GM10248 (cell line): ENCODE measurements at regions of chr1 and their contacts with region 1.

Region 1: DNA sequence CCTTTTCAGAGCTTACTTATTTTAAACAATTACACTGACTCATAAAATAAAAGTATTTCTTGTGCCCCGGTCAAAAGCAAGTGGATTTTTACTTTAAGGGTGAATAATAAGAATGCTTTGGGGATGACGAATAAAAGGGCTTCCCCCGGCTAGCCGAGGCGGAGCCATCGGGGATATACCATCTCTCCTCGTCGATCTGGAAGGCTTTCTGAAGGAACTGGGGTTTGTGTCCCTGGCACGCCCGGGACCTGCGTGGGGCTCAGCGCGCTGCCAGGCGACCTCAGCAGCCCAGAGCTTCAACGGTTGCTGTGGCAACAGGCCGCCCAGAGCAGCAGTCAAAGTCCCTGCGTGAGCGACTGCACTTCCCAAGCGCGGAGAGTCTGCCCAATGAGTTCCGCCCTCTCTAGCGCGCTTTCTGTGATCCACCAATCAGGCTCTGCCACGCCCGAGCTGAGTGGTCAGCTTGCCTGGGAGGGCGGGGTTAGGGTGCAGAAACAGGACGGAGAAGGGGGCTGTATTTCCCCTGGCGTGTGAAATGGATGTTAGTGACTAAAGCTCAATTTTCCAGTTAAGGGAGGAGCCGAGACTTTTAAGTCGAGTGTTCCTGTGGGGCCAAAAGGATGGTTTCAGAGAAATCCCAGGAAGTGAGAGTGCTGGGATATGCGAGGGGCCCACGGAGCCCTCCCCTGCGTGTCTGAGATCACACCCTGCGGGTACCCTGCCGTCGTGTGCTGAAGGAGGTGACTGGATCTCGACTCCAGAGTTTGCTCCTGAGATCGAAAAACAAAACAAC is 33.0 kb upstream of the MGST3 start:
- DNase-seq: peak; percentile 95
- CTCF ChIP-seq: no peak

Region 2: DNA sequence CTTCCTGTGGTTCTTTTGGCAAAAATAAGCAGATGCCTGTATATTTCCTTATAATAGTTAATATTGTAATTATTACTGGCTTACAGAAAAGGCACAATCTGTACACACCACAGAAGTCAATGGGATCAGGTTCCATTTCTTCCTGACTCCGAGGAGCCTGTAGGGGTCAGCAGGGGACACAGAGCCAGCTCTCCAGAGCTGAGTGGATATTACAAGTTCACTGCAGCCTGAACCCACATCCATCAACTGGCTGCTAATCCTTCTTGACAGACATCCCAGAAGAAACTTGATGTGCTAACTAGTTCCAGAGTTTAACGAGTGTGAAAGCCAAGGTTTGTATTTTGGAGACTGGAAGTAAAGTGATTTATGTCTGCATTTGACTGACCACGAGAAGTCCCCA is 445.4 kb before region 1 on chr1:
- CTCF ChIA-PET with region 1: no interaction called
- POLR2A ChIA-PET with region 1: no interaction called
- DNase-seq: no peak
- CTCF ChIP-seq: no peak

Region 3: DNA sequence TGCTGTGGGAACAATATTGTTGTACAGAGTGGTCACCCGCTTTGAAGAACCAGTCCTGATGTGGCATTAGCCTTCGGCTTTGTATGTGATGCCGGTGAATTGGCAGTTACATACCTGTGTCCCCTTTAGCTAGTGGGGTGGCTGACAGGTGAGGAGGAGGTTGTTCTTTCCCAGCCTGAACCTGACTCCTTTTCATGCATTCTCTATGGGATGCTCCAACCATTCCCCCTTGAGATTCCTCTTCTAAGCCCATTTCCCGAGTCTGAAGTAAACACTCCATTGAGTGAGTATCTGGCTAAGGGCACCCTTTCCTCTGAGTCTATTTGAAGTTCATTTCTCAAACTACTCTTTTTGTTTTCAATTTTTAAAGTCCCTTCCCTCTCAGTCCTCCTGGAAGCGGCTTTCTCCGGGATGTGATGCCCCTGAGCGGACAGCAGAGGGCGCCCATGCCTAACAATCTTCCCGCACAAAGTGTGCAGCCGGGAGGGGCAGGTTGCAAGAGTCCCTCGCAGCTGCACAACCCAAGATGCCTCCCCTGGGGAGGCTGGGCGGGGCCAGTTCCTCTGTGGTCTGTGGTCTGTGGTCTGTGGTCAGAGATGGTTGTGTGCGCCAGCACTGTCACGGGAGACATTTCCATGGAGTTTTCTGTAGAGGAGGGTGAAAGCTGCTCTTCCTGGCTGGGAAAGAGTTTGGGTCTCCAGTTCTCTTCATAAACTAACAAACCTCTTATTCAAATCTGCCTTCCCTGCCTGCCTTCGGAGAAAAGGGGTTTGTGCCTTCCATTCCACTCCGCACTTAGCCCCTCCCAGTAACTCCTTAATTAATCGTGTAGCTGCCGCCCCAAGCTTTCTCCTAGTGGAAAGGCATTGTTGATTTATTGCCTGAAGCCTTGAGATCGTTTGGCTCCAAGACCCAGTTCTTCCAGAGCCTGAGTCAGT is 205.2 kb before region 1 on chr1:
- CTCF ChIA-PET with region 1: interaction called, 120 read pairs
- POLR2A ChIA-PET with region 1: no interaction called
- DNase-seq: peak; percentile 86
- CTCF ChIP-seq: peak; percentile 89

Region 4: GRCh38 chr1:165403835-165404482 is 194.1 kb before region 1 on chr1:
- CTCF ChIA-PET with region 1: interaction called, 120 read pairs
- POLR2A ChIA-PET with region 1: no interaction called
- DNase-seq: peak; percentile 46
- CTCF ChIP-seq: peak; percentile 50

Region 5: GRCh38 chr1:165575468-165576099 is 22.5 kb before region 1 on chr1:
- CTCF ChIA-PET with region 1: interaction called, 26 read pairs
- POLR2A ChIA-PET with region 1: no interaction called
- DNase-seq: no peak
- CTCF ChIP-seq: no peak

Region 6: GRCh38 chr1:165580941-165581871 is 16.9 kb before region 1 on chr1:
- CTCF ChIA-PET with region 1: interaction called, 26 read pairs
- POLR2A ChIA-PET with region 1: no interaction called
- DNase-seq: no peak
- CTCF ChIP-seq: no peak

Region 7: DNA sequence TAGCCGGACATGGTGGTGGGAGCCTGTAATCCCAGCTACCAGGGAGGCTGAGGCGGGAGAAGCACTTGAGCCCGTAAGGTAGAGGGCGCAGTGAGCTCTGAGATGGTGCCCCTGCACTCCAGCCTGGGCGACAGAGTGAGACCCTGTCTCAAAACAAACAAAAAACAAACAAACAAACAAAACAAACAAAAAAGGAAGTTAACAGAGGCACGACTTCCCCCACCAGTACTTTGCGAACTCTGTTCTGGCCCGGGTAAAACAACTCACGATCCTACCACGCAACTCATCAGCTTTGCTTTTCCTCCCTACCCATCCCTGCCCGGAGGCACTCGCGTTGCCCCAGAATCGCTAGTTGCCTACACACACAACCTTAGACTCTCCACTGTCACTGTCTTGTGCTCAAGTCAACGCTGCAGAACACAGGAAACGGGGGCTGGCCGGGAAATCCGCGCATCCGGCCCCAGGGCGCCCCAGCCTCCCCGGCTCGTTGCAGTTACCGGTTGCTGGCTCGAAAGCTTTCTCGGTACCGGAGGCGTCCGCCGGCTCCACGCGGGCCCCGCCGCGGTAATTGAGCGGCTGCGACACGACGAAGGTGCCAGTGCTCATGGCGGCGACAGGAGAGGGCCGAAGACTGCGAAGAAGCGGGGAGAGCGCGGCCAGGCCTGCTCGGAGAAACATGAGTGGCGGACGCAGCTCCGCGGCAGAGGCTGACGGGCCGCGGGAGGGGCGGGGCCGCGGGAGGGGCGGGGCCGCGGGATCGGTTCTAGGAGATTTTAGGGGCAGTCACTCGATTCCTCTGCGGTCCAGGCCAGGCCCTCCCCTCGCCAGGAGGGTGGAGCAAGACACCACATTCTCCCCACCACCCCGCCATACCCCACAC is 100.0 kb after region 1 on chr1 and contains the start of gene ALDH9A1:
- CTCF ChIA-PET with region 1: interaction called, 16 read pairs
- POLR2A ChIA-PET with region 1: no interaction called
- DNase-seq: peak; percentile 90
- CTCF ChIP-seq: peak; percentile 48

Region 8: DNA sequence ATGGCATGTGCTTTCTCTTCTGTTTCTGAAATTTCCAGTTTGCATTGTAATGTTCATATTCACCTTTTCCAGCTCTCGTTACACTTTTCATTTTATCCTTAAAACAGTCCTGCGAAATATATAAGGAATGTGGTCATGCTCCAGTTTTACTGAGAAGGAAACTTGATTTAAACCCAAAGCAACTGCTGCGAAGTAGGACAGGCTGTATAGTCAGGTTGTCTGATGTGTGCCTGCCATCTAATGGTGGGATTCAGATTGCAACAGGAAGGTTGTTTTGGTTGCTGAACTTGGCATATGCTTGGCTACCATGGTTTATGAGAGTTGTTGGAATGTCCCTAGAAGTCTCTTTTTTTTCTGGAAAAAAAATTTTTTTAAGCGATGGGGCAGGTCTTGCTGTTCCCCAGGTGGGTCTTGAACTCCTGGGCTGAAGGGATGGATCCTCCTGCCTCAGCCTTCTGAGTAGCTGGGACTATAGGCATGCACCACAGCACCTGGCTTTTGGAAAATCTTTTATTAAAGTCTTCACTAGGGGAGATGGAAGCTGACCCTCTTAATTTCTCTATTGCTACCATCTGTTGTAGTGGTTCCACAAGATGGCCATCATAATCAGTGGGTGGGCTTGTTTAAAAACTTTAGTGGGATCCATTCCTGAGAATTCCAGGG is 316.2 kb after region 1 on chr1:
- CTCF ChIA-PET with region 1: interaction called, 120 read pairs
- POLR2A ChIA-PET with region 1: no interaction called
- DNase-seq: peak; percentile 78
- CTCF ChIP-seq: peak; percentile 80